HEK293T (cell line): ENCODE measurements at regions of chr13 and their contacts with region 1.

Region 1: GRCh38 chr13:77480066-77480465 is 55.4 kb upstream of the SCEL start:
- DNase-seq: no peak

Region 2: GRCh38 chr13:77113496-77113895 is 366.6 kb before region 1 on chr13:
- CTCF ChIA-PET with region 1: interaction called, 10 read pairs
- POLR2A ChIA-PET with region 1: no interaction called
- DNase-seq: no peak

Region 3: DNA sequence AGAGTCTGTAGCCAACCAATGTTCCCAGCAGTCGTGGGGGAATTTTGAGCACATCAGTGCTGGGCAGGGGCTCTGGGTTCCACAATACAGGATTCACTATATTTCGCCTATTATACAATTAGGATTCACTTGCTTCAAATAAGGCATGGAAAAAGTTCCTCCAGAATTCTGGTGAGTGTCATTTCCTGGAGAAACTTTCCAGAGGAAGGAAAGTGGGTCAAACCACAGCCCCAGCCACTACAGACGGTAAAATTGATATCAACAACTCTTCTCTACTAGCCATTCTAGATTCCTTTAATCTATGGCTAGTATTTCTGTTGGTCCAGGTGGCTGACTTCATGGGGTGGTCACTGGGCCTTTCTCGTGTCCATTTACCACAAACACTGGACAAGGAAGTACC is 163.6 kb before region 1 on chr13:
- CTCF ChIA-PET with region 1: interaction called, 12 read pairs
- POLR2A ChIA-PET with region 1: no interaction called
- DNase-seq: no peak

Region 4: GRCh38 chr13:77377016-77377415 is 103.0 kb before region 1 on chr13:
- CTCF ChIA-PET with region 1: no interaction called
- POLR2A ChIA-PET with region 1: no interaction called
- DNase-seq: no peak

Region 5: DNA sequence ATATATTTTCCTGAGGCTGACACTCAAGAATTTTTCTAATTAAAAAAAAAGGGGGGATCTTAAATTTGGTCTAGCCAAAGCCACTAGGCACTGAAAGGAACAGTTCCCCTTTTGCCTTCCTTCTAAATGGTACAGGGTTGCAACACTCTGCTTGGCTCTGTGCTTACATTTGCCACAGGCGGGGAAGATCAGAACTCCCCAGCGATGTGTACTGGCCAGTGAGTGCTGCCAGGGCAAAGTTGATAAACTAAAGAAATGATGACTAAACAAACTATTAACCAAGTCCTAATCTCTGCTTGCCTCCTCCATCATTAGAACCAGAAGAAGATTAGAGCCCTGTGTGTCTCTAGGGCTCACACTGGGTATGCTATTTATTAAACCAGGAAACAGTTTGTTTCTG is 19.9 kb before region 1 on chr13:
- CTCF ChIA-PET with region 1: interaction called, 10 read pairs
- POLR2A ChIA-PET with region 1: no interaction called
- DNase-seq: no peak

Region 6: GRCh38 chr13:77492982-77493381 is 12.9 kb after region 1 on chr13:
- CTCF ChIA-PET with region 1: interaction called, 14 read pairs
- POLR2A ChIA-PET with region 1: interaction called, 5 read pairs
- DNase-seq: peak; percentile 55